ENCODE measurements at regions of chr1 and their contacts with region 1.

Region 1: DNA sequence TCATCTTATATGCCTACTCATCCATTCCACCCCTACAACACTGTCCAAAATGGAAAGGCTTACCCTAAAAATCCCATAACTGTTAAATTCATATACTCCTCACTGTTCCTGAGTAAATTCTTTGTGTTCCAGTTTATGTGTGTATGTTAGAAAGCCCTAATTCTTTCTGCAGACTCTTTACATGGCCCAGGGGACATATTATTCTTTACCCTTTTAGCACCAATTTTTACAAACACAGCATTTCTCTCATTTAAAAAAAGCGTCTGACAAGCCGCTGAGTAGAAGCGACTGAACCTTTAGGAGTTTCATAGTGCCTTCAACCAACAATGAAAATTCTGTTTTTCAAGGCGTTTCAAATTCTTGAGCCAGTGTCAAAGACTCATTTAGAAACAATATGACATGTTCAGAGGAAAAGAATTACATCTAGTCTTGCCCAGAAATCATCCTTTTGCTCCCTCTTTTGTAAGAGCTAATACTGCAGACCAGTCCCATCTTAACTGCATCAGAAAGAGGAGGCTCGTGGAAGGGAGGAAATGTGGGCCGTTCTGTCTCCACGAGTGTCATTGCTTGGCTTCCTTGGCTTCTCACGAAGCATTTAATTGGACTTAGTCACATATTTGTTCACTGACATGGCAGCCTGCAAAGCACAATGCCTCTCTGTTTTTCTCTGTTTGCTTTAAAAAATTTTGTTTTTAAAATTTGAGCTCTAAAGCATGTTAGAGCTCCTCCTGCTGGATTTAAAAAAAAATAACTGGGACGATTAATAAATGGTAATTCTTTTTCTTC is 21.3 kb upstream of the C1orf105 start:
- DNase-seq: peak; percentile 72
- H3K4me3 Mint-ChIP-seq: peak overlapping the region; percentile 7
- H3K27ac Mint-ChIP-seq: peak overlapping the region; percentile 61
- H3K4me1 Mint-ChIP-seq: peaks cover 46% of the 10 kb centered on the region
- H3K27me3 Mint-ChIP-seq: no peaks in the 10 kb centered on the region

Region 2: DNA sequence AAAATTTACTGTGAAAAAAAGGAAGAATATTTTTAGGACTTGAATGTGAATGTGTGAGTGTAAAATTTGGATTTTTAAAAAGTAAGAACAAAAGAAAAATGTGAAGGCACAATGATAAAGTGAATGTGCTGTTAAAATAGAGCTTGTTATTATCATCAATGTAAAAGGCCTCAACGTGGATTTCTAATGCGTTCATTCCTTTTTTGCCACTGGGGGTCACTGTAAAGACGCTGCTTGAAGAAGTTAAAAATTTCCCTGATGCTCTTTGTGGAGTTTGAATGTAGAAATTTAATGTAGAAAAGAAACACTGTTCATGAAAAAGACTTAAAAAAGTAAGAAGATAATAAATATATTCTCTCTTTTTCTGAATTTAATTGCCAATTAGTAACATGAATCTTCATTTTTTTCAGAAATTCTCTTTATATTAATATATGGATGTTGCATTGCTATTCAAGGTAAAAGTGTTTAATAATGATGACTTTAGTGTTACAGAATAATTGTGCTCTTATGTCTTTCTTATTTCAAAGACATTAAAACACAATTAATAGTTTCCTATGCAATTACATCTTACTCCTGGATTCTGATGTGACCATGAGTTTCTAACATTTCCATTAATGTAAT is 396.3 kb before region 1 on chr1:
- intact Hi-C with region 1: loop called (anchors 2 kb)
- DNase-seq: peak; percentile 80
- H3K4me3 Mint-ChIP-seq: no peak overlapping the region
- H3K27ac Mint-ChIP-seq: no peak overlapping the region
- H3K4me1 Mint-ChIP-seq: peaks cover 3% of the 10 kb centered on the region
- H3K27me3 Mint-ChIP-seq: peaks cover under 1% of the 10 kb centered on the region

Region 3: DNA sequence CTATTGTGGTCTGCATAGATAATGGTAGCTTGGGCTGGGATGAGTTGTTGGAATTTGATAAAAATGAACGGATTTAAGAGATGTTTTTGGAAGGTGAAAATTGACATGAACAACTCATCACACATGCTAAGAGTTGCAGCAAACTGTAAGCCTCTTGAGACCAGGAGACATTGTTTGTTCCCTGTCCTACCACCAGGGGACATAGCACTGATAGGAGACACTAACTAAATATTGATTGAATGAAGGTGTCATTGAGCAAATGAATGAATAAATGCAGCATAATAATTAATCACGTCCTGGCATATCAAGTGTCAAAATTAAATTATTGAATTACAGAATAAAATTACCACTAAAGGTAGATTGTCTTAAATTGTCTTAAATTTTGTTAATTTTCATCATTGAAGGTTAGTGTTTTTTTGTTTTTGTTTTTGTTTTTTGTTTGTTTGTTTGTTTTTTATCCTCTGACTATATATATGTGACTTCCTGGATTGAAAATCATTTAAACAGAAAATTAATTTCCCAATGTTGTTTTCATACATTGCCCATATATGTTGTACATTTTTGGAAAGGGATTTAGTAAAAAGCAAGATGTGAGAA is 264.0 kb before region 1 on chr1:
- intact Hi-C with region 1: loop called (anchors 5 kb)
- DNase-seq: peak; percentile 63
- H3K4me3 Mint-ChIP-seq: no peak overlapping the region
- H3K27ac Mint-ChIP-seq: no peak overlapping the region
- H3K4me1 Mint-ChIP-seq: peaks cover 16% of the 10 kb centered on the region
- H3K27me3 Mint-ChIP-seq: no peaks in the 10 kb centered on the region

Region 4: DNA sequence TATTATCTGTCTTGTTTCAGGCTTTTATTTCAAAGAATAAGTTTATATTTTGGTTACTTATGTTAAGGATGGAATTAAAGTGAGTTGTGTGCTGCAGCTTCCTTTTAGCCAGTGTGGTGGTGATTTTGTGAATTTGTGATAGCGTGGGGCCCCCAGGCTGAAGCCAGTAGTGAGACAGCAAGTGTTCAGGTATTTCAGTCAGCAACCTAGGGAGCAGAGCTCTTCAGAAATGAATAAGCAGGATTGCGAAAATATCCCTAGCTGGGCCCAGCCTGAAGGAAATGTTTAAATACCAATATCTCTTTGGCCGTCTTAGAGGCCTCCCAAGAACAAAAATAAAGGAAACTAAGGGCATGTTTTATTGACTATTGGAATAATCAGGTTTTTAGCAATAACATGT is 129.5 kb before region 1 on chr1:
- intact Hi-C with region 1: loop called (anchors 1 kb)
- DNase-seq: no peak
- H3K4me3 Mint-ChIP-seq: peak overlapping the region; percentile 29
- H3K27ac Mint-ChIP-seq: peak overlapping the region; percentile 88
- H3K4me1 Mint-ChIP-seq: peaks cover 44% of the 10 kb centered on the region
- H3K27me3 Mint-ChIP-seq: no peaks in the 10 kb centered on the region

Region 5: DNA sequence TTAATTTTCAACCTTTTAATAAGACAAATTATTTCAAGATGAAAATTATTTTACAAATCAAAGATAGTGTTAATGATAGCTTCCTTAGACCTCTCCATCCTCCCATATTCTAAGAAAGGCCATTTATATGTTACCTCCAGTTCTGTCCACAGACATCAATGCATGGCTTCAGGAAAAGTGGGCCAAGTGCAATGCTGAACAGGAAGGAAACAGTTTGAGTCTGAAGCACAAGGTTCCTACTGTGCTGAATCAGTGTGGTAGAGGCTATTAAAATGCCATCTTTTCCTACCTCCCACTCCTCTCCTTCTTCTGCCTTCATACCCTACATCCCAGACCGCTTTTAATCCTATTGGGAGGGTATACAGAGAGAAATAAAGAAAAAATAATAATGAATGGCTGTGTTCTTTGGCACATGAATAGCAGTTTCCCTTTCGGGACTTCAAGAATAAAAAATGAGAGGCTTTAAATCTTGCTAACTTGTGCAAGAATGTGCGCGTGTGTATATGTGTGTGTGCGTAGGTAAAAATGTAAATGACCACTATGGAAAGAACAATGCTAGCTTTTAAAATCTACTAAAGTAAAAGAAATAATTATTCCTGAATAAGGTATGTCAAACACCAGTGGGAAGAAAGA is 41.3 kb before region 1 on chr1:
- intact Hi-C with region 1: loop called (anchors 1 kb)
- DNase-seq: no peak
- H3K4me3 Mint-ChIP-seq: peak overlapping the region; percentile 7
- H3K27ac Mint-ChIP-seq: peak overlapping the region; percentile 84
- H3K4me1 Mint-ChIP-seq: peaks cover 45% of the 10 kb centered on the region
- H3K27me3 Mint-ChIP-seq: no peaks in the 10 kb centered on the region